Esophagus squamous epithelium (tissue), 5 donors: ENCODE measurements at regions of chr9 and their contacts with region 1.

Region 1: DNA sequence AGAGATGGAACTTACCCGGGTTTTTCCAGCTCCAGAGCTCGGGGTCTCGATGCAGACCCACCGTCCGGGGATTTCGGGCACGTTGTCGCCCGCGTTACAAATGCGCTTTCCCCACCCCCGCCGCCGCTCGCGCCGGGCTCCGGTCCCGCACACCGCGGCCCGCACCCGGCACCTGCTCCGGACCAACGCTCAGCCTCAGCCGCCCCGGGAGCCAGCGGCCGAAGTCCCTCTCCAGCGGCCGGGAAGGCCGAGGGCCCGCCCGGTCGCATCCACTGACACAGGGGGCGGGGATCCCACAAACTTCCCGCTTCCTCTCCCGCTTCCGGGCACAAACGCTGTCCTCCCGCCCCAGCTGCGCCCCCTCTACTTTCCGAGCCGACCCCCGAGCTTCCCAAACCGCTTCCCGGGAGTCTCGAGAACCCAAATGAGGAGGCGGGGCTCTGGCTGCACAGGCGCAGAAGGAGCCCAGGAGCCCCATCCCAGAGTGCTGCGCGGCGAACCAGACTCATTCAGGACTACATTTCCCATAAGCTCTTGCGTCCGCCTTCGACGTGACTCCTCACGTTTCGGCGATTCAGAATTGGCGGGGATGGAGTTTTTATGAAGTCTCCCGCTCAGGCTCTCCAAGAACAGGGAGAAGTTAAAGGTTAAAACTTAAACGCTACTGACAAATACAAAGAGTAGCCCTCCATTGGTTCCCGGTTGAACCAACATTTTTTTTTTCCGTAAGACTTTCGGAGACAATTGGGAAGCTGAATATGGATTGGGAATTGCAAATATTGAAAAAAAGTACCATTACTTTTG is at the start of gene ZNF782:
- DNase-seq: peak; percentile 41
- H3K4me3 ChIP-seq: peak within 1 kb of the TSS; percentile 70 to 90 (median 81)
- H3K27ac ChIP-seq: peak within 1 kb of the TSS; percentile 79 to 89 (median 86)
- H3K4me1 ChIP-seq: peaks cover 7 to 33% (median 13%) of the 10 kb centered on the region in 3 donors
- H3K27me3 ChIP-seq: no peaks in the 10 kb centered on the region
- CTCF ChIP-seq: peak in 1 of 6 experiments; percentile 31
- POLR2A ChIP-seq: peak in 3 of 4 donors; percentile 17 to 55 (median 53)
- total RNA-seq, gene ZNF782: 4.7 to 10.1 (median 6.5) TPM

Region 2: GRCh38 chr9:97110696-97111095 is 256.4 kb after region 1 on chr9:
- intact Hi-C with region 1: loop called (anchors 10 kb)
- DNase-seq: no peak
- H3K4me3 ChIP-seq: no peak overlapping the region
- H3K27ac ChIP-seq: no peak overlapping the region
- H3K4me1 ChIP-seq: no peaks in the 10 kb centered on the region
- H3K27me3 ChIP-seq: peaks cover 0 to 9% (median 0%) of the 10 kb centered on the region in 4 donors
- CTCF ChIP-seq: no peak
- POLR2A ChIP-seq: no peak

Region 3: DNA sequence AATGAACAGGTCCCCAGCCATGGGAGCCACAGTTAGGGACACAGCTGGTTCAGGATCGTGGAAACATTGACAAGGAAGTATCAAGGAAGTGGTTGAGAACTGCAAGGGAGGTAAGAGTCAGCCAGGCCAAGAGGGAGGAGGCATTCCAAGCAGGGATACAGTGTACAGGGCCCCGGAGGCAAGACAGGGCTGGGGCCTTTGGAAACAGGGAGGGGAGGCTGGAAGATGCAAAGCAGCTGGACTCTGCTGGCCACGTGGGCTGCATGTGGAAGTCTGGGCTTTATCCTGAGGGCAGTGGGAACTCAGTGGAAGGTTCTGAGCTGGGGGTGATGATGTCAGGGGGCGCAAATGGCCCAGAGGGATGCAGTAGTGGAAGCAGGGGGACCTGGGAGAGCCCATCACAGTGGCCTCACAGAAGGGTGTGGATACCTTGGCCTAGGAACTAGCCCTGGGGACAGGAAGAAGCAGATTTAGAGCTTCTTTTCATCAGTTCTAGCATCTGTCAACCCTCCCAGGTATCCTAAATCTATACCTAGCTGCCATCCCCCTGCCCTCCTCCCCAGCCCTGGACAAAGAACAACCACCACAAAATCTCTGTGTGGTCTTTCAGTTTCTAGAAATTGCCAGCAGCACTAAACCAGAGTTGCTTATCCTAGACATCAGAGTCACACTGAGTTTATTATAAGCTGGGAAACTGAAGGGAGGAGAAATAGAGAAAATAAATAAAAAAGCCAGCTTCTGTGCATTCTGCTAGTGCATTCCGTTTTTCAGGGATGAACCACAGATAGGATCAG is 467.6 kb after region 1 on chr9:
- intact Hi-C with region 1: no loop called
- DNase-seq: no peak
- H3K4me3 ChIP-seq: no peak overlapping the region
- H3K27ac ChIP-seq: no peak overlapping the region
- H3K4me1 ChIP-seq: no peaks in the 10 kb centered on the region
- H3K27me3 ChIP-seq: no peaks in the 10 kb centered on the region
- CTCF ChIP-seq: no peak
- POLR2A ChIP-seq: no peak

Region 4: DNA sequence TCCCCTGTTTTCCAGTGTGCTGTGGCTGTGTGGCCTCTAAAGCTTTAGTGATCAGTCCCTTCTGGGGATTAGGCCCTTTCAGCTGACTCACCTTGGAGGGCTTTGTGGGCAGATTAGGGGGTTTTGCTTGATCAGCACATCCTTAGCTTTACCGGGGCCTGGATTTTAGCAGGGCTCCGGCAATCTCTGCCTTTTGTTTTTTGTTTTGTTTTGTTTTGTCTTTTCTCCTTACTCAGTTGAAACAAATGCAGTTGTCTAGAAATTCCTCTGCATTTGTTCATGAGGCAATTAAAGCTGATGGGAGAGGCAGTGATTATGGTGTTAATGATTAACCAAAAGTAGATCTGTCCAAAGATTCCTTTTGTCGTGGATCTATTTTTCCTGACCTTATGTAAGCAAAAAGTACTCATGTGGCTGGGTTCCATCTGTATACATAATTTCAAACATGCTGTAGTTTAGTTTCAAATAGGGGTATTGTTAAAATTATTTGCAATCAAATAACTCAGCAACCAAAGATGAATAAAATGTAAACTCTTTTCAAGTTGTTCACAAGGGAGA is 552.4 kb after region 1 on chr9:
- intact Hi-C with region 1: loop called (anchors 5 kb)
- DNase-seq: no peak
- H3K4me3 ChIP-seq: no peak overlapping the region
- H3K27ac ChIP-seq: no peak overlapping the region
- H3K4me1 ChIP-seq: peaks cover 0 to 11% (median 4%) of the 10 kb centered on the region in 3 donors
- H3K27me3 ChIP-seq: peaks cover 0 to 31% (median 0%) of the 10 kb centered on the region in 4 donors
- CTCF ChIP-seq: no peak
- POLR2A ChIP-seq: no peak